ENCODE measurements at regions of chr3 and their contacts with region 1.

Region 1: DNA sequence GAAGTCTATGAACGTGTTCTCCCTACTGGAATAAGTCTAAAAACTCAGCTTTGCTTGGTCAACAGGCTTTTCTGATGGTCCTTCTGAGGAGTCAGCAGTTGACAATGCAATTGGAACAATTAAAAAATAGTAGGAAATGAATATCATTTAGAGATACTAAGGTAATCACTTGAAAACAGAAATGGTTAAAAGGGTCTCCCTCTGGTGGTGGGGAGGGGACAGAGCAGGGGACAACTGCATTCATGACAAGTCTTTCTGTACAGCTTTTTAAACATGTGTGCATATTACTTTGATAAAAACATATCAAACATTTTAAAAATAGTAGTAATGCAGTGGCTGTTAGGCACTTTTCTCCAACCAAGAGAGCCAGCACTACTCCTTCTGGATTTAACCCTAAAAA is 119.9 kb upstream of the FHIT start:
- DNase-seq: no peak
- ATAC-seq: peak; percentile 88
- H3K4me3 ChIP-seq: no peak overlapping the region
- H3K27ac ChIP-seq: no peak overlapping the region
- H3K4me1 ChIP-seq: no peaks in the 10 kb centered on the region
- H3K27me3 ChIP-seq: peaks cover 0 to 1% of the 10 kb centered on the region in 2 experiments; a peak in 1 of 4 replicates
- CTCF ChIP-seq: peak; percentile 66 to 73 (median 69)
- EP300 ChIP-seq: no peak
- POLR2A ChIP-seq: no peak
- RAD21 ChIP-seq: peak; percentile 73

Region 2: GRCh38 chr3:59575113-59576001 is 1795.8 kb before region 1 on chr3:
- CTCF ChIA-PET with region 1: no interaction called
- POLR2A ChIA-PET with region 1: no interaction called
- RAD21 ChIA-PET with region 1: no interaction called
- SMC1A ChIA-PET with region 1: interaction called, 3 read pairs
- in situ Hi-C with region 1: loop called (anchors 10 kb)
- intact Hi-C with region 1: loop called (anchors 10 kb)
- DNase-seq: peak; percentile 40
- ATAC-seq: peak; percentile 95
- H3K4me3 ChIP-seq: no peak overlapping the region
- H3K27ac ChIP-seq: no peak overlapping the region
- H3K4me1 ChIP-seq: no peaks in the 10 kb centered on the region
- H3K27me3 ChIP-seq: no peaks in the 10 kb centered on the region
- CTCF ChIP-seq: peak; percentile 93 to 97 (median 95)
- EP300 ChIP-seq: no peak
- POLR2A ChIP-seq: no peak
- RAD21 ChIP-seq: peak; percentile 97

Region 3: DNA sequence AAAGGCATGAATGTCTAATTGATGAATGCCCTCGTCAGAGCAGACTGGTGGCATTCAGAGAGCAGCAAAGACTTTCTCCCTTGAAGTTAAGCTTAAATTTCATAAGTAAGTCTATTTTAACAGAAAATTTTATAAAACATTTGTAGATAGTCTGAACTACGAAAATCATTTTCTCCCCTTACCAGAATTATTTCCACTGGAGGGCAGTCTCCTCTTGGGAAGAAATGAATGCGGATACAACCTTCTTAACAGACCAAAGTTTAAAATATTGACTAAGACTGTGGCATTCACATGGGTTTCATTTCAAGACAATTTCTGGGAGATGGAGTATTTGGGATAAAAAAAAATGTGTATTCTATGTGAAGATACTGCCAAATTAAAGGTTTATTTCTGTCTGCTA is 788.8 kb before region 1 on chr3:
- CTCF ChIA-PET with region 1: interaction called, 4 read pairs
- POLR2A ChIA-PET with region 1: no interaction called
- RAD21 ChIA-PET with region 1: no interaction called
- SMC1A ChIA-PET with region 1: interaction called, 3 read pairs
- in situ Hi-C with region 1: no loop called
- intact Hi-C with region 1: loop called (anchors 10 kb)
- DNase-seq: no peak
- ATAC-seq: no peak
- H3K4me3 ChIP-seq: no peak overlapping the region
- H3K27ac ChIP-seq: no peak overlapping the region
- H3K4me1 ChIP-seq: no peaks in the 10 kb centered on the region
- H3K27me3 ChIP-seq: no peaks in the 10 kb centered on the region
- CTCF ChIP-seq: no peak
- EP300 ChIP-seq: no peak
- POLR2A ChIP-seq: no peak
- RAD21 ChIP-seq: peak; percentile 25; the same call in 1 of the 2 replicates

Region 4: GRCh38 chr3:60755096-60755495 is 616.0 kb before region 1 on chr3:
- CTCF ChIA-PET with region 1: interaction called, 28 read pairs
- POLR2A ChIA-PET with region 1: no interaction called
- RAD21 ChIA-PET with region 1: interaction called, 15 read pairs
- SMC1A ChIA-PET with region 1: interaction called, 14 read pairs
- in situ Hi-C with region 1: loop called (anchors 10 kb)
- intact Hi-C with region 1: no loop called
- DNase-seq: no peak
- ATAC-seq: peak; percentile 38; the same call in 1 of the 3 replicates
- H3K4me3 ChIP-seq: no peak overlapping the region
- H3K27ac ChIP-seq: no peak overlapping the region
- H3K4me1 ChIP-seq: no peaks in the 10 kb centered on the region
- H3K27me3 ChIP-seq: no peaks in the 10 kb centered on the region
- CTCF ChIP-seq: peak; percentile 18 to 40 (median 32); a peak in 4 of 6 replicates
- EP300 ChIP-seq: no peak
- POLR2A ChIP-seq: no peak
- RAD21 ChIP-seq: peak; percentile 28; the same call in 1 of the 2 replicates

Region 5: GRCh38 chr3:61251174-61251972 is 119.8 kb before region 1 on chr3 and contains the start of gene FHIT:
- CTCF ChIA-PET with region 1: no interaction called
- POLR2A ChIA-PET with region 1: no interaction called
- RAD21 ChIA-PET with region 1: interaction called, 3 read pairs
- SMC1A ChIA-PET with region 1: interaction called, 5 read pairs
- in situ Hi-C with region 1: no loop called
- intact Hi-C with region 1: loop called (anchors 1 kb)
- DNase-seq: peak; percentile 87
- ATAC-seq: peak; percentile 96
- H3K4me3 ChIP-seq: peak within 1 kb of the TSS; percentile 76
- H3K27ac ChIP-seq: peak within 1 kb of the TSS; percentile 68
- H3K4me1 ChIP-seq: peaks cover 5% of the 10 kb centered on the region; the same call in 1 of the 2 replicates
- H3K27me3 ChIP-seq: no peaks in the 10 kb centered on the region
- CTCF ChIP-seq: peak in 1 of 3 experiments; percentile 21; a peak in 1 of 6 replicates
- EP300 ChIP-seq: no peak
- POLR2A ChIP-seq: peak; percentile 74
- RAD21 ChIP-seq: 0 out of 2 replicates have a peak, but pooled peaks have one; percentile 8
- polyA plus RNA-seq, gene FHIT: 4.2 to 7.9 TPM

Region 6: DNA sequence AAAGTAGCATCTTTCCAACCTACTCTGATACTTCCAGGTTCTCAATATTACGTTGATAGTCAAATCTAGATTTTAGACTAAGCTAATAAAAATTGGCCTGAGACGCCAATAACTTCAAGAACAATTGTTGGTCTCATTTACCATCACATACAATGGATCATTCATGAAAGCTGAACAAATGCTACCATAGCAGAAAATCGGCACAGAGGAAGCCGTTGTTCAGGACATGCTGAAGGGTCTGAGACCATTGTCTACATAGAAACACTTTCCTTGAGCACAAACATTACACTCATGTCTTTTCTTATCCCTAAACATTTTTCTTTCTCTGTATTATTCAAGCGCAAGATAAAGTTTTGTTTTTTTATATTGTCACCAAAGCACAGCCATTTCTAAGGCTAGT is 82.7 kb before region 1 on chr3:
- CTCF ChIA-PET with region 1: no interaction called
- POLR2A ChIA-PET with region 1: no interaction called
- RAD21 ChIA-PET with region 1: no interaction called
- SMC1A ChIA-PET with region 1: no interaction called
- in situ Hi-C with region 1: no loop called
- intact Hi-C with region 1: no loop called
- DNase-seq: no peak
- ATAC-seq: no peak
- H3K4me3 ChIP-seq: no peak overlapping the region
- H3K27ac ChIP-seq: no peak overlapping the region
- H3K4me1 ChIP-seq: no peaks in the 10 kb centered on the region
- H3K27me3 ChIP-seq: no peaks in the 10 kb centered on the region
- CTCF ChIP-seq: no peak
- EP300 ChIP-seq: no peak
- POLR2A ChIP-seq: no peak
- RAD21 ChIP-seq: no peak

Region 7: DNA sequence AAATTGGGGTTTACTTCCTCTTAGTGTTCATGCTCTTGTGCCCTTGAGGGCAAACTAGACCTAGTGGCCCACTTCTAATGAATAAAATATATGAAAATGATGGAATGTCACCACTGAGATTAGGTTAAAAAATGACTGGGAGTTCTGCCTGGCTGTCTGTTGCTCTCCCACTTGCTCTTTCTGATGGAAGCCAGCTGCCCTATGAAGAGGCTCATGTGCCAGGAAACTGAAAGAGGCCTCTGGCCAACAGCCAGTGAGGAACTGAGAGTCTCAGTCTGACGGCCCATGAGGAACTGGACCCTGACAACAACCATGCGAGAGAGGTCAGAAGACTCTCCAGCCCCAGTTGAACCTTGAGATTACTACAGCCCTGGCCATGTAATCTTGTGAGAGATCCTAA is 12.8 kb before region 1 on chr3:
- CTCF ChIA-PET with region 1: interaction called, 20 read pairs
- POLR2A ChIA-PET with region 1: interaction called, 3 read pairs
- RAD21 ChIA-PET with region 1: no interaction called
- SMC1A ChIA-PET with region 1: interaction called, 19 read pairs
- in situ Hi-C with region 1: no loop called
- intact Hi-C with region 1: no loop called
- DNase-seq: peak; percentile 76
- ATAC-seq: peak; percentile 99
- H3K4me3 ChIP-seq: no peak overlapping the region
- H3K27ac ChIP-seq: no peak overlapping the region
- H3K4me1 ChIP-seq: peaks cover 16% of the 10 kb centered on the region; the same call in 1 of the 2 replicates
- H3K27me3 ChIP-seq: no peaks in the 10 kb centered on the region
- CTCF ChIP-seq: no peak
- EP300 ChIP-seq: peak; percentile 95 to 99
- POLR2A ChIP-seq: no peak
- RAD21 ChIP-seq: 0 out of 2 replicates have a peak, but pooled peaks have one; percentile 2

Region 8: GRCh38 chr3:61381745-61382392 is 10.7 kb after region 1 on chr3:
- CTCF ChIA-PET with region 1: interaction called, 32 read pairs
- POLR2A ChIA-PET with region 1: no interaction called
- RAD21 ChIA-PET with region 1: interaction called, 7 read pairs
- SMC1A ChIA-PET with region 1: interaction called, 7 read pairs
- in situ Hi-C with region 1: no loop called
- intact Hi-C with region 1: no loop called
- DNase-seq: no peak
- ATAC-seq: peak; percentile 99
- H3K4me3 ChIP-seq: no peak overlapping the region
- H3K27ac ChIP-seq: no peak overlapping the region
- H3K4me1 ChIP-seq: no peaks in the 10 kb centered on the region
- H3K27me3 ChIP-seq: no peaks in the 10 kb centered on the region; a peak in 1 of 4 replicates
- CTCF ChIP-seq: peak; percentile 58 to 73 (median 61); a peak in 5 of 6 replicates
- EP300 ChIP-seq: no peak
- POLR2A ChIP-seq: no peak
- RAD21 ChIP-seq: peak; percentile 85